HCT116 (cell line): ENCODE measurements at regions of chrX and their contacts with region 1.

Region 1: DNA sequence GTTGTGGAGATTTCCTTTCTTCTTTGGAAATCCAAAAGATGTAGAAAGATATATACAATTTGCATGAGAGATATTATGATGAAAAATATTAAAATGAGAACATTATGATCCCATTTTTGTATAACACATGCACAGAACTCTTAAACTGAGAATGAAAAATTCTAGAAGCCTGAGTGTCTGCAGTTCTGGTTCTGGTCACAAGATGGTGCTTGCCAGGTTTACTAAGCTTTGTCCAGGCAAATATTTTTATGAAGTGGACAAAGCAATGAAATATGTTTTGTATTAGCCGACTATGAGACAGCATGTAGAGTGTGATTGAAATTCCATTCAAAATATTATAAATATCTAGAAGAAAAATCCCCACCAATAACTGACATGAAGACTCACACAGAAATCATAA is 2.2 kb downstream of the PWWP3B start:
- DNase-seq: peak; percentile 8
- ATAC-seq: no peak
- H3K4me3 ChIP-seq: no peak overlapping the region
- H3K27ac ChIP-seq: no peak overlapping the region
- H3K4me1 ChIP-seq: peaks cover 0 to 5% of the 10 kb centered on the region in 2 experiments; a peak in 1 of 4 replicates
- H3K27me3 ChIP-seq: no peaks in the 10 kb centered on the region
- CTCF ChIP-seq: peak; percentile 28 to 54 (median 44); a peak in 5 of 6 replicates
- POLR2A ChIP-seq: no peak
- RAD21 ChIP-seq: peak; percentile 54

Region 2: GRCh38 chrX:106392346-106392745 is 222.0 kb after region 1 on chrX:
- CTCF ChIA-PET with region 1: interaction called, 11 read pairs
- POLR2A ChIA-PET with region 1: no interaction called
- RAD21 ChIA-PET with region 1: no interaction called
- intact Hi-C with region 1: loop called (anchors 2 kb)
- DNase-seq: no peak
- ATAC-seq: no peak
- H3K4me3 ChIP-seq: no peak overlapping the region
- H3K27ac ChIP-seq: no peak overlapping the region
- H3K4me1 ChIP-seq: no peaks in the 10 kb centered on the region
- H3K27me3 ChIP-seq: no peaks in the 10 kb centered on the region
- CTCF ChIP-seq: no peak
- POLR2A ChIP-seq: no peak
- RAD21 ChIP-seq: no peak